ENCODE measurements at regions of chrX and their contacts with region 1.

Region 1: DNA sequence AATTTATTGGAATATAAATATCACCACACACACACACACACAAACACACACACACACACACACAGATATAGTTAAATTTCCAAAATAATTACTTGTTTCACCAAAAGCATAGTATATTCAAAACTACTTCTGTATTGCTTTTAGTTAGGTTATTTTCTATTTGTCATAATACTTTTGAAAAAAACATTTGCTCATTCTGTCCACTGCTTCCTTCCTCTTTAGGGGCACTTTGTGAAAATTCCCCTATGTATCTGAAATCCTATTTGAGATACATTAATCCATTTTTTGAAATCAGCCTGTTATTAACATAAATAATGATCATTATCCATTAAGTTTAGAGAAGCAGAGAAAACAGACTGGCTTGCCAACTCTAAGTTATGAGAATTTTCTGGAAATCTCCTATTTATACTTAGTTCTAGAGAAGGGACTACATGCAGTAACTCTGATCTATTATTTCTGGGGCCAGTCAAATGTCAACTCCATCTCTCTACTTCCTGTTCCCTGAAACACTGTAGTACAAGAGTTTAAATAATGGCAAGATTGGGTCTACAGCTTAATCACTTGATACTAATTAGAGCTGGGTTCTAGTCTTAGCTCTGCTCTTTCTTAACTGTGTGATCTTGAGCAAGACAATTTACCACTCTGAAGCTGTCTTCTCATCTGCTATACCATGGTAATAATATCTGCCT is 54.4 kb upstream of the GPR174 start:
- DNase-seq: no peak
- ATAC-seq: no peak
- H3K4me3 ChIP-seq: no peak overlapping the region
- H3K4me3 Mint-ChIP-seq: no peak overlapping the region
- H3K27ac ChIP-seq: peak overlapping the region in 1 of 2 experiments; percentile 46
- H3K27ac Mint-ChIP-seq: peak overlapping the region; percentile 71
- H3K4me1 ChIP-seq: peaks cover 28% of the 10 kb centered on the region
- H3K4me1 Mint-ChIP-seq: peaks cover 52% of the 10 kb centered on the region
- H3K27me3 ChIP-seq: no peaks in the 10 kb centered on the region
- H3K27me3 Mint-ChIP-seq: no peaks in the 10 kb centered on the region
- CTCF ChIP-seq: no peak

Region 2: GRCh38 chrX:78800694-78801093 is 289.3 kb before region 1 on chrX:
- CTCF ChIA-PET with region 1: no interaction called
- POLR2A ChIA-PET with region 1: no interaction called
- intact Hi-C with region 1: no loop called
- DNase-seq: peak in 1 of 9 experiments; percentile 0
- ATAC-seq: no peak
- H3K4me3 ChIP-seq: no peak overlapping the region
- H3K4me3 Mint-ChIP-seq: no peak overlapping the region
- H3K27ac ChIP-seq: no peak overlapping the region
- H3K27ac Mint-ChIP-seq: no peak overlapping the region
- H3K4me1 ChIP-seq: no peaks in the 10 kb centered on the region
- H3K4me1 Mint-ChIP-seq: peaks cover 9% of the 10 kb centered on the region
- H3K27me3 ChIP-seq: no peaks in the 10 kb centered on the region
- H3K27me3 Mint-ChIP-seq: no peaks in the 10 kb centered on the region
- CTCF ChIP-seq: no peak

Region 3: DNA sequence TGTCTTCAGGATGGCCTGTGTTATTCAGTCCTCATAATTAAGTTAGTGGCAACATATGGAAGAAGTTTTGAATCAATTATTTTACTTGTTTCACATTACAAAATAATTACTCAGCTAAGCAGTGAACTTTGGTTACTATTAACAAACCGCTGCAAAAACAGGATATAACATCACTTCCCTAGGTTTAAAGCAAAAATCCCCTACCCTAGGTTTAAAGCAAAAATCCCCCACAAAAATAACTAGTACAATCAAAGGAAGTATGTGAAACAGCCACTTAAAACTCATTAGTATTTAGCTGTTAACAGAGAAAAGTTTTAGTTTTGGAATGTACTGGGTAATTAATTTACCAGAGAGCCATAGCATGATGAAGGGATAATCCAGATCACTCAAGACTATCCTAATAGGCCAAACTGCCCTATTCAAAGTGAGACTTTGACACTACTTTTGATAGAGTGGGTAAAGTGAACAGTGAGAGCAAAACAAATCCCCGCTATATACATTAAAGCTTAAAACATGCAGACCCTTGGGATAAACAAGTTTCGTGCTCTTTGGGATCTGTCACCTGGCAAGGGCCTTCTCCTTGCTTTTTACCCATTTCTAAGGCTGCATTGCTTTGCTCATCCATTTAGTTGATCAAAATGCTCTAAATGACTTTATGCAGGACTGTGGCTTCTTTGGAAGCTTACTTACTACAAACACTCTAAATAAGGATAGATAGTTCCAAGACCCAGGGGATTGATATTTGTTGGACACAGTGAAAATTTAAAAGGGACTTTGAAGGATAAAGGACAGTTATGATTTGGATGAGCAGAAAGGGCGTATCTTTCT is 18.1 kb after region 1 on chrX:
- CTCF ChIA-PET with region 1: no interaction called
- POLR2A ChIA-PET with region 1: interaction called, 3 read pairs
- intact Hi-C with region 1: loop called (anchors 2 kb)
- DNase-seq: peak in 2 of 9 experiments; percentile 69 to 84
- ATAC-seq: peak; percentile 89
- H3K4me3 ChIP-seq: peak overlapping the region; percentile 15 to 20
- H3K4me3 Mint-ChIP-seq: peak overlapping the region; percentile 68
- H3K27ac ChIP-seq: peak overlapping the region; percentile 80 to 99
- H3K27ac Mint-ChIP-seq: peak overlapping the region; percentile 98
- H3K4me1 ChIP-seq: peaks cover 59% of the 10 kb centered on the region
- H3K4me1 Mint-ChIP-seq: peaks cover 57% of the 10 kb centered on the region
- H3K27me3 ChIP-seq: no peaks in the 10 kb centered on the region
- H3K27me3 Mint-ChIP-seq: no peaks in the 10 kb centered on the region
- CTCF ChIP-seq: no peak

Measured in CD8-positive, alpha-beta T cell (primary cell).